IMR-90 (cell line): ENCODE measurements at regions of chr1 and their contacts with region 1.

Region 1: GRCh38 chr1:156892190-156893047 is 1.1 kb upstream of the PEAR1 start:
- DNase-seq: peak; percentile 85
- ATAC-seq: peak; percentile 67
- H3K4me3 ChIP-seq: peak overlapping the region; percentile 16; the same call in 1 of the 2 replicates
- H3K27ac ChIP-seq: no peak overlapping the region; the same call in 1 of the 2 replicates
- H3K4me1 ChIP-seq: peaks cover 23% of the 10 kb centered on the region
- H3K27me3 ChIP-seq: peaks cover 14% of the 10 kb centered on the region
- CTCF ChIP-seq: peak; percentile 88
- POLR2A ChIP-seq: 0 out of 2 replicates have a peak, but pooled peaks have one; percentile 26
- RAD21 ChIP-seq: peak; percentile 76

Region 2: DNA sequence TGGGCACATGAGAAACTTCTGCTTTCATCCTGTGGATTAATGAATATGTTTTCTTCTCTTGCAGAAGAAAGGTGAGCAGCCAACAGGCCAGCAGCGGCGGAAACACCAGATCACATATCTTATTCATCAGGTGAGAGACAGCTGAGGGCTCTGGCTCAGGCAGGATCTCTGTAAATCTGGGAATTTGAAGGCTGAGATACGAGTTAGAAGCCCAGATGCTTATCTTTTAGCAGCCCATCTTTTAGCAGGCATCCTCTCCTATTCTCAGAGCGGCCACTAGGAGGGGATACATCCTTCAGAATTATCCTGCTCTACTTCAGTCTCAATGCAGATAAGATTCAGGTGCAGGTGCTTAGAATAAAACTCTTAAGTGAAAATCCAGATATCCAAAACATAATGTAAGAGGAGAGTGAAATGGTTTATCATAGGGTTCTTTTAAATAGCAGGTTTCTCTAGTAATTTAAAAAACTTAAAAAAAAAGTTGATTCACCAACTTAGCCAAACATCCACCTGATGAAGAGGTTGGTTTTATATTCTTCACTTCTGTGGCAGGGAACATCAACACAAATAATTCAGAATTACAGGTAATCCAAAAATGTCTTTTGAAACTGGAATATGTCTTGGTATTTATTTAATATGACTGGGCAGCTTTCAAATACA is 95.1 kb before region 1 on chr1:
- CTCF ChIA-PET with region 1: interaction called, 5 read pairs
- POLR2A ChIA-PET with region 1: no interaction called
- dilution Hi-C with region 1: no loop called
- in situ Hi-C with region 1: no loop called
- intact Hi-C with region 1: loop called (anchors 1 kb)
- DNase-seq: peak; percentile 64
- ATAC-seq: peak; percentile 69
- H3K4me3 ChIP-seq: no peak overlapping the region
- H3K27ac ChIP-seq: no peak overlapping the region
- H3K4me1 ChIP-seq: peaks cover 9% of the 10 kb centered on the region
- H3K27me3 ChIP-seq: no peaks in the 10 kb centered on the region
- CTCF ChIP-seq: peak; percentile 82
- POLR2A ChIP-seq: no peak
- RAD21 ChIP-seq: peak; percentile 80

Region 3: GRCh38 chr1:156838981-156839410 is 53.4 kb before region 1 on chr1:
- CTCF ChIA-PET with region 1: interaction called, 5 read pairs
- POLR2A ChIA-PET with region 1: no interaction called
- dilution Hi-C with region 1: no loop called
- in situ Hi-C with region 1: no loop called
- intact Hi-C with region 1: loop called (anchors 1 kb)
- DNase-seq: no peak
- ATAC-seq: peak; percentile 87
- H3K4me3 ChIP-seq: no peak overlapping the region
- H3K27ac ChIP-seq: no peak overlapping the region
- H3K4me1 ChIP-seq: no peaks in the 10 kb centered on the region
- H3K27me3 ChIP-seq: peaks cover 82% of the 10 kb centered on the region
- CTCF ChIP-seq: peak; percentile 75
- POLR2A ChIP-seq: no peak
- RAD21 ChIP-seq: peak; percentile 73

Region 4: DNA sequence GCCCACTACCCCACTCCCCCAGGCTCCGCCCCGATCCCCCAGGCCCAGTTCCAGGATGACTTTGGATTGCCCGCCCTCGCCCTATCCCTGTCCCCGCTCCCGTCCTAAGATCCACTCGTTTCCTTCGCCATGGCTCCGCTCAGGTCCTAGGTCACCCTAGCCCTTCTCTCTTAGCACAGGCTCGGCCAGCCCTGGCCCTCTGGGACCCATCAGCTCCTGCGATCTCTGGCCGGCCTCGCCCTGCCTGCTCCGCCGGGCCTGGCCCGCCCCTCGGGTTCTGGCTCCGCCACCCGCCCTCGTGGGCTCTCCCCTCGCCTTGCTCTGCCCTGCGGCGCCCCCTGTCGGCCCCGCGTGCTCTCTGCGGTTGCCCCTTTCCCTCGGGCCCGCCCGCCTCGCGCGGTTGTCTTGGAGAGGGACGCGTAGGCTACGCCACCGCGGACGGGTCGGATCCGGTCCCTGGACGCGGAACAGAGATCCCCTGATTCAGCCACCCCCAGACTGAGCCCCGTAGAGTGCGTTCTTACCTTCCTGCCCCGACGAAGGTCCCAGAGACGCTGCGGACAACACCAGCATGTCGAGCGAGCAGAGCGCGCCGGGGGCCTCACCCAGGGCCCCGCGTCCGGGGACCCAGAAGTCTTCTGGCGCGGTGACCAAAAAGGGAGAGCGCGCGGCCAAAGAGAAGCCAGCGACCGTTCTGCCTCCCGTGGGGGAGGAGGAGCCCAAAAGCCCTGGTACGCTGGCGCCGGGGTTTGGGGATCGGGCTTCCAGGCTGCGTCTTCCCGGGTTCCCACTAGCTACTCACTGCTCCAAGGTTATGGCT is 28.0 kb after region 1 on chr1 and contains the start of gene LRRC71:
- CTCF ChIA-PET with region 1: interaction called, 8 read pairs
- POLR2A ChIA-PET with region 1: no interaction called
- dilution Hi-C with region 1: no loop called
- in situ Hi-C with region 1: loop called (anchors 5 kb)
- intact Hi-C with region 1: loop called (anchors 1 kb)
- DNase-seq: peak; percentile 64
- ATAC-seq: peak; percentile 98
- H3K4me3 ChIP-seq: peak within 1 kb of the TSS; percentile 36
- H3K27ac ChIP-seq: no peak within 1 kb of the TSS; the same call in 1 of the 2 replicates
- H3K4me1 ChIP-seq: peaks cover 2% of the 10 kb centered on the region
- H3K27me3 ChIP-seq: peaks cover 48% of the 10 kb centered on the region
- CTCF ChIP-seq: peak; percentile 98
- POLR2A ChIP-seq: no peak; the same call in 1 of the 2 replicates
- RAD21 ChIP-seq: peak; percentile 95
- total RNA-seq, gene LRRC71: not detected in 2 replicates

Region 5: GRCh38 chr1:156927215-156928042 is 35.0 kb after region 1 on chr1:
- CTCF ChIA-PET with region 1: interaction called, 24 read pairs
- POLR2A ChIA-PET with region 1: no interaction called
- dilution Hi-C with region 1: no loop called
- in situ Hi-C with region 1: loop called (anchors 5 kb)
- intact Hi-C with region 1: no loop called
- DNase-seq: peak; percentile 64
- ATAC-seq: peak; percentile 87
- H3K4me3 ChIP-seq: peak overlapping the region; percentile 39
- H3K27ac ChIP-seq: no peak overlapping the region
- H3K4me1 ChIP-seq: no peaks in the 10 kb centered on the region
- H3K27me3 ChIP-seq: peaks cover 42% of the 10 kb centered on the region
- CTCF ChIP-seq: peak; percentile 88
- POLR2A ChIP-seq: no peak
- RAD21 ChIP-seq: peak; percentile 86

Region 6: GRCh38 chr1:156959414-156959813 is 67.0 kb after region 1 on chr1:
- CTCF ChIA-PET with region 1: no interaction called
- POLR2A ChIA-PET with region 1: no interaction called
- dilution Hi-C with region 1: no loop called
- in situ Hi-C with region 1: no loop called
- intact Hi-C with region 1: no loop called
- DNase-seq: peak; percentile 77
- ATAC-seq: peak; percentile 95
- H3K4me3 ChIP-seq: no peak overlapping the region
- H3K27ac ChIP-seq: no peak overlapping the region
- H3K4me1 ChIP-seq: peaks cover 3% of the 10 kb centered on the region
- H3K27me3 ChIP-seq: no peaks in the 10 kb centered on the region
- CTCF ChIP-seq: no peak
- POLR2A ChIP-seq: no peak
- RAD21 ChIP-seq: no peak

Region 7: DNA sequence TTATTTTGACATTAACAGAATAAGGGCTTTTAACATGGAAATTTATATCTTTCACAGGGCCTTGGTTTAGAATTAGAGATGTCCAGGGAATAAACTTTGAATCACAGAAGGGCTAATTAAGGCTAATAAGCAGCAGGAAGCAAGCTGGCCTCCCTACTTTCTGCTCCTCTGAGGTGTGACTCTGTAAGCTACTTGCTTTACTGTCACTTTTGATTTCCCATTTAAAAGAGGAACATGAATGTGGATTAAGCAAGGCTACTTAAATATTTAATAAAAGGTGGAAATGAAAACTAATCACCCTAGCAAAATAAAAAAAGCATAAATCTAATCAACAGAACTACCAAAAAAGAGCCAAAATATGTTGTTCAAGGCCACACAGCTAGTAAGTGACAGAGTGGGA is 978.1 kb after region 1 on chr1:
- CTCF ChIA-PET with region 1: no interaction called
- POLR2A ChIA-PET with region 1: no interaction called
- dilution Hi-C with region 1: no loop called
- in situ Hi-C with region 1: no loop called
- intact Hi-C with region 1: no loop called
- DNase-seq: no peak
- ATAC-seq: no peak
- H3K4me3 ChIP-seq: no peak overlapping the region
- H3K27ac ChIP-seq: no peak overlapping the region
- H3K4me1 ChIP-seq: no peaks in the 10 kb centered on the region
- H3K27me3 ChIP-seq: no peaks in the 10 kb centered on the region
- CTCF ChIP-seq: no peak
- POLR2A ChIP-seq: no peak
- RAD21 ChIP-seq: no peak